IMR-90 (cell line): ENCODE measurements at regions of chr13 and their contacts with region 1.

Region 1: DNA sequence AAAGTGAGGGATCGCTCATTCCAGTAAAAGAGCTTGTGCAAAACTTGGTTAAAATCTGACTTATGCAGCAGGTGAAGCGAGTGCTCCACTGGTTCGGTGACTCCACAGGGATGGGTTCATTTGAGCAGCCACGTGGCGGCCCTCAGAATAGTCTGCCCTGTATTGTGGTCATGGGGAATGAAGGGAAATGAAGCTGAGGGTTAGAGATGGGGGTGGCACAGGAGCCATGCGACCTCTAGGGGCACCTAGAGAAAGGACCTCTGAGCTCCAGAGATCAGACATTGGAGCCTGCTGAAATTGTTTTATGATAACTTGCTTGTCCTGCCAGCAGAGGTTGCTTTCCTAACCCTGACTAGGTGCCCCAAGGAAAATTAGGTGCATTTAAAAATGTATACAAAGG is 26.6 kb downstream of the CBY2 start:
- DNase-seq: no peak
- ATAC-seq: no peak
- H3K4me3 ChIP-seq: no peak overlapping the region
- H3K27ac ChIP-seq: no peak overlapping the region
- H3K4me1 ChIP-seq: no peaks in the 10 kb centered on the region
- H3K27me3 ChIP-seq: peaks cover 6% of the 10 kb centered on the region
- CTCF ChIP-seq: no peak
- POLR2A ChIP-seq: no peak
- RAD21 ChIP-seq: no peak

Region 2: GRCh38 chr13:45670189-45670885 is 58.4 kb before region 1 on chr13:
- CTCF ChIA-PET with region 1: no interaction called
- POLR2A ChIA-PET with region 1: no interaction called
- dilution Hi-C with region 1: no loop called
- in situ Hi-C with region 1: no loop called
- intact Hi-C with region 1: no loop called
- DNase-seq: no peak
- ATAC-seq: no peak
- H3K4me3 ChIP-seq: no peak overlapping the region
- H3K27ac ChIP-seq: no peak overlapping the region
- H3K4me1 ChIP-seq: no peaks in the 10 kb centered on the region
- H3K27me3 ChIP-seq: no peaks in the 10 kb centered on the region
- CTCF ChIP-seq: no peak
- POLR2A ChIP-seq: no peak
- RAD21 ChIP-seq: no peak

Region 3: GRCh38 chr13:45879670-45880069 is 150.9 kb after region 1 on chr13:
- CTCF ChIA-PET with region 1: interaction called, 10 read pairs
- POLR2A ChIA-PET with region 1: no interaction called
- dilution Hi-C with region 1: no loop called
- in situ Hi-C with region 1: no loop called
- intact Hi-C with region 1: no loop called
- DNase-seq: no peak
- ATAC-seq: no peak
- H3K4me3 ChIP-seq: no peak overlapping the region
- H3K27ac ChIP-seq: no peak overlapping the region
- H3K4me1 ChIP-seq: no peaks in the 10 kb centered on the region
- H3K27me3 ChIP-seq: peaks cover 11% of the 10 kb centered on the region
- CTCF ChIP-seq: no peak
- POLR2A ChIP-seq: no peak
- RAD21 ChIP-seq: no peak